ENCODE measurements at regions of chr1 and their contacts with region 1.

Region 1: DNA sequence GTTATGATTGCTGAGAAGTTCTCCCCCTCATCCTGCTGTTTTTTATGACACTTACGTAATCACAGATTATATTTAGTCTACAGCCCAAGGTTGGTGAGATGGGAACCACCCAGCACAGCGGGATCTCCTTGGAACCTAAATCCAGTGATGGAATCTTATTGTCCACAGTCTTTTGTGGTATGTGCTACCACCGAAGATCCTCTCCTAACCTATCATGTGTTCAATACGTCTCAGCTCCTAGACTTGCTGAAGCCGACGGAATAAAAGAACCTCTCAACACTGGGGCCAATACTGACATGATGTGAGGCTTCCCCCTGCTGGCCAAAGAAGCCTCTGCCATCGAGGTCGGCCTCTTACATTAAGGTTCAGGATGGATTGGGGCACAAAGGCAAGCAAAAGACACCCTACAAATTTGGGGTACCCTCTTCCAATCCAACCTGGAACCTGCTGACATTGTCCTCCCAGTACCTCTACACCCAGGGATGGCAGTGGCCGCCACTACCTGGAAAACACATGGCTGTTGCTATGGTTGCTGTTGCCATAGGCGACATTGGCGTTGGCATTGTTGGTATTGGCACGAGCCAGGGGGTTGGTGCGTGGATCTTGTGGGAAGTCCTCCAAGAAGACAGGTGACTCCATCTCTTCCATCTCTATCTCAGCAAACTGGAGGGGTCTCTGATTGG is 19.4 kb upstream of the KIF21B start:
- DNase-seq: peak; percentile 40
- H3K4me3 ChIP-seq: no peak overlapping the region
- H3K27ac ChIP-seq: no peak overlapping the region
- H3K4me1 ChIP-seq: peaks cover 7% of the 10 kb centered on the region
- H3K27me3 ChIP-seq: peaks cover 21% of the 10 kb centered on the region
- CTCF ChIP-seq: peak; percentile 88

Region 2: GRCh38 chr1:200888349-200888838 is 154.5 kb before region 1 on chr1:
- intact Hi-C with region 1: no loop called
- DNase-seq: no peak
- H3K4me3 ChIP-seq: no peak overlapping the region
- H3K27ac ChIP-seq: no peak overlapping the region
- H3K4me1 ChIP-seq: peaks cover 16% of the 10 kb centered on the region
- H3K27me3 ChIP-seq: peaks cover 84% of the 10 kb centered on the region
- CTCF ChIP-seq: no peak

Region 3: GRCh38 chr1:200979574-200980451 is 63.1 kb before region 1 on chr1:
- intact Hi-C with region 1: loop called (anchors 5 kb)
- DNase-seq: no peak
- H3K4me3 ChIP-seq: no peak overlapping the region
- H3K27ac ChIP-seq: no peak overlapping the region
- H3K4me1 ChIP-seq: no peaks in the 10 kb centered on the region
- H3K27me3 ChIP-seq: peaks cover 5% of the 10 kb centered on the region
- CTCF ChIP-seq: peak; percentile 28

Measured in left ventricle myocardium inferior (tissue), 1 donor.